ENCODE measurements at regions of chr11 and their contacts with region 1.

Region 1: DNA sequence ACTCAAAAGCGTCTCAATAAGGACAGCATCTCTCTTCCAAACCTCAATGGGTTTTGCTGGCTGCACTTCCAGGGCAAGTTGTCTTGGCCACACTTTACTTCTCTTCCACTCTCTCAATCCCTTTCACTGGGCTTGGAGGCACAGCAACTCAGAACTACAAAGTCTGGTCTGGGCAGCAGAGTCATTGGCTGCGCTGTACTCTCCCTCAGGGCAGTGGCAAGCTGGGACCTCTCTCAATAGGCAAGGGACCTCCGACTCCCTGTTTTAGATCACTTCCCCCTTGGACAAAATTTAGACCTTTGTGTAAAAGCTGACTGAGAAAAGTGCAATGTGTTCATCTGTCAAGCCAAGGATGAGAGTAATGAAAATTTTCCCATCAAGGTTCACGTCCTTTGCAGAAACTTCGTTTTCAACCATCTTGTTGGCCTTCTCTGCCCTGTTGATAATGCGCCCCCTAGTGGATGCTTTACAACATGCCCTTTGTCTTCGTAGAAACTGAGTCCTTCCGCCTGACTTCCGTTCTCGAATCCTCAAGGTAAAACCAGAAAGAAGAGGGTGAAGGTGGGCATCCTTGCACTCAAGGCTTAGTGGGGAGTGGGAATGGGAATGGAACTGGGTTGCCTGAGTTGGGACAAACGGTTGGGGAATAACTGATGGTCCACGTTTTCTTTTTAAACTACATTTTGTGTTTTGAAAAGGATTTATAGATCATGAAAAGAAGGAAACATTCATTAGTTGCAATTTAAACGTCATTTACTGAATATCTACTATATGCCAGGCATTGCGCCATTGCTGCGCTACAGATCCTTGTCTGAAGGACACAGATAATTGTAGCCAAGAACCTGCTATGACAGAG is 99.1 kb downstream of the CD44 start:
- DNase-seq: peak; percentile 68
- H3K4me3 Mint-ChIP-seq: no peak overlapping the region
- H3K27ac Mint-ChIP-seq: no peak overlapping the region
- H3K4me1 Mint-ChIP-seq: peaks cover 72% of the 10 kb centered on the region
- H3K27me3 Mint-ChIP-seq: no peaks in the 10 kb centered on the region

Region 2: GRCh38 chr11:34926101-34926830 is 311.8 kb before region 1 on chr11:
- CTCF ChIA-PET with region 1: interaction called, 8 read pairs
- POLR2A ChIA-PET with region 1: no interaction called
- intact Hi-C with region 1: loop called (anchors 1 kb)
- DNase-seq: no peak
- H3K4me3 Mint-ChIP-seq: no peak overlapping the region
- H3K27ac Mint-ChIP-seq: no peak overlapping the region
- H3K4me1 Mint-ChIP-seq: peaks cover 16% of the 10 kb centered on the region
- H3K27me3 Mint-ChIP-seq: no peaks in the 10 kb centered on the region

Region 3: DNA sequence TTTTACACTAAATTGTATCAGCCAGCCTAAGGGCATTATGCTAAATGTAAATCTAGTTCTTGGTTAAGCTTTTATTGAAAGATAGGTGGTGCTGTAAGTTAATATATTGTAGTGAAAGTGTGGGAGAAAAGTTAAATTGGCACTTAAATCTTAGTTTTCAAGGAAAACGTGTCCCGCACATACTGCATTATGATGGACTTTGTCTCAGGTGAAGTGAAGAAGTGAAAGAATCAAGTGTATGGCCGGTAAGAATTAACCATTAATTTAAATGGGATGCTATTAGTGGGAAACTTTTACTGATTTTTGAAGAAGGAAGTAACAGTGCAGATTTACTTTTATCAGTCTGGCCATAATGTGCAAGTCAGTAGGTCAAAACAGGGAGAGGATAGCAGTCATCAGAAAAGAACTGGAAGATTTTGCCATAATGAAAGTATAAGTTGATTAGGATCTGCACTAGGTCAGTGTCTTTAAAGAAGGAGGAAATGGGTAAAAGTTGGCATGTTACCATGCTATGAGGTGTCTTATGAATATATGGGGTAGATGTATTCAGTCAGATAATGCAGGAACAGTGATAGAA is 240.0 kb before region 1 on chr11:
- CTCF ChIA-PET with region 1: interaction called, 12 read pairs
- POLR2A ChIA-PET with region 1: no interaction called
- intact Hi-C with region 1: loop called (anchors 1 kb)
- DNase-seq: no peak
- H3K4me3 Mint-ChIP-seq: peak overlapping the region; percentile 7
- H3K27ac Mint-ChIP-seq: peak overlapping the region; percentile 25
- H3K4me1 Mint-ChIP-seq: peaks cover 19% of the 10 kb centered on the region
- H3K27me3 Mint-ChIP-seq: no peaks in the 10 kb centered on the region

Region 4: GRCh38 chr11:35006389-35007128 is 231.5 kb before region 1 on chr11:
- CTCF ChIA-PET with region 1: interaction called, 7 read pairs
- POLR2A ChIA-PET with region 1: no interaction called
- intact Hi-C with region 1: loop called (anchors 2 kb)
- DNase-seq: peak; percentile 73
- H3K4me3 Mint-ChIP-seq: no peak overlapping the region
- H3K27ac Mint-ChIP-seq: no peak overlapping the region
- H3K4me1 Mint-ChIP-seq: peaks cover 49% of the 10 kb centered on the region
- H3K27me3 Mint-ChIP-seq: peaks cover 4% of the 10 kb centered on the region

Region 5: DNA sequence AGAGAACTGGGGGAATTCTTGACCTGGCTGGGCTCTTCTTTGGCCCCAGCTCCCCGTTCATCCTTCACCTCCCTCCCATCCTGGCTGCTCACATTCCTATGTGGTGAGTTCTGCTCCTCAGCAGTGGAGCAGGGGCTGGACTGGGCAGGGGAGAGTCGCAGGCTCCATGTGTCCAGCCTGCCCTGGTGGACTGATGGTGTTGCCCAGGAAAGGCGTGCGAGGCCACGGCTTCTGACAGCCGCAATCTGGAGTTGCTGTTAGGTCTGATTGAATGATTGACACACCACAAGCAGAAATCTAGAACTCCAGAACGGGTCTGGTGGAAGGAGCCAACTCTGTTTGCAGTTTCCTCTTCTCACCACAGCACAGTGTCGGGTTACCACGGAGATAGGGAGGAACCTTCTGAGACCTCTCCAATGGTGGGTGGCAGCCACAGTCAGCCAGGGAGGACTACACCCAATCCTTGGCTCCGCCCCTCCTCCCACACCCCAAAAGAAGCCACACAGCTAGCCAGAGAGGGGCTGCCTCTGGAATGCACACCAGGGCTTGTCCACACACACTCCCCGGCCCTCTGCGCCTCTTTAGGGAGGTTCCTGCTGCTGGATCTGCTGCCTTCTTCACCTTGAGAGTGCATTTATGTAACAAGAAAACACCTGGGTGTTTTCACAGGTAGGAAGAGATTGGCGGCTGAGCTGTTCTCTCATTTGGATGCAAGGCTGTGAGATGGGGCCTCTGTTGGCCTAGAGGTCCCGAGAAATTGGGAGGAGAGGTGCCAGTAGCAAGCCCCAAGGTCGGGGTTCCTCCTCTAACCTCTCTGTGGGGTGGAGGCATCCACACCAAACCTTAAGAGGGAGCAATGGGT is 155.5 kb before region 1 on chr11:
- CTCF ChIA-PET with region 1: no interaction called
- POLR2A ChIA-PET with region 1: no interaction called
- intact Hi-C with region 1: loop called (anchors 5 kb)
- DNase-seq: peak; percentile 90
- H3K4me3 Mint-ChIP-seq: peak overlapping the region; percentile 62
- H3K27ac Mint-ChIP-seq: peak overlapping the region; percentile 81
- H3K4me1 Mint-ChIP-seq: peaks cover 93% of the 10 kb centered on the region
- H3K27me3 Mint-ChIP-seq: no peaks in the 10 kb centered on the region

Region 6: GRCh38 chr11:35214792-35215193 is 23.3 kb before region 1 on chr11:
- CTCF ChIA-PET with region 1: interaction called, 3 read pairs
- POLR2A ChIA-PET with region 1: no interaction called
- intact Hi-C with region 1: loop called (anchors 1 kb)
- DNase-seq: peak; percentile 78
- H3K4me3 Mint-ChIP-seq: no peak overlapping the region
- H3K27ac Mint-ChIP-seq: peak overlapping the region; percentile 81
- H3K4me1 Mint-ChIP-seq: peaks cover 74% of the 10 kb centered on the region
- H3K27me3 Mint-ChIP-seq: no peaks in the 10 kb centered on the region

Region 7: DNA sequence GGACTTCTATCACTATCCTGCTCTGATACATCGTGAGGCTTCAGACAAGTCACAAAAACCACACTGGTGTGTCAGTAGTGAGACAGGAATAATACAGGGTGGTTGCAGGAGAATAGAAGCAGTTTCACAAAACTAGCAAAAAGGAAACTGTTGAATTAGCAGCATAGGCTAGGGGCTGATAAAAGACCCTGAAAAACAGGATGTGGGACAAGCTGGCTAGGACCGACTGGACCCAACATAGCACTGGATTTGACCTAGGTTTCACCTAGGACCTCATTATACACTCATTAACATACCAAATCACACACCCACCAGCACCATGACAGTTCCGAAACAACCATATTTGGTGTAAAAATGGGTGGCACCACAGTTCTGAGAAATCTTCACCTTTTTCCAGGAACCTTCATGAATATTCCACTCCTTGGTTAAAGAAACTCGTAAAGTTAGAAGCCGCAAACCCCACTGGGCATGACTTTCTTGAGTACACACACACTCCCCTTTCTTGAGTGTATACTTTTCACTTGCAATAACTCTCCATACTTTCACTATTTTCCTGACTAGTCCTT is 105.0 kb after region 1 on chr11:
- CTCF ChIA-PET with region 1: interaction called, 5 read pairs
- POLR2A ChIA-PET with region 1: no interaction called
- intact Hi-C with region 1: loop called (anchors 5 kb)
- DNase-seq: peak; percentile 58
- H3K4me3 Mint-ChIP-seq: peak overlapping the region; percentile 42
- H3K27ac Mint-ChIP-seq: peak overlapping the region; percentile 66
- H3K4me1 Mint-ChIP-seq: peaks cover 42% of the 10 kb centered on the region
- H3K27me3 Mint-ChIP-seq: peaks cover 2% of the 10 kb centered on the region

Region 8: DNA sequence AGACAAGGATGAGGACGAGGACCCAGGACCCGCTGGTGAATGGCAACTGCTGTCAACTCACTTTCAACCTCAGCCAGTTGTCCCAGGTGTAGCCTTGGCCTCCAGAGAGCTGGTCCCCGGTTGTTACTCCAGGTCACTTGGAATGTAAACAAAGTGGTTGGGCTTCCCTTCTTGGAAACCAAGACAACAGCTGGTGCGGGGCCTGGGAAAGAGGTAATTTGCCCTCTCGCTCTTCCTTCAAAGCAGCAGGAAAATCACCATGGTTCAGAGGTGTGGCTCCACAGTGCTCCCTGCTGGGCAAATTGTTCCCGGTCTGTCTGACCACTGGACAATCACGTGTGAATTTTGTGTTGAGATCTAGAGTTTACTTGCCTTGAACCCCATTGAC is 166.3 kb after region 1 on chr11:
- CTCF ChIA-PET with region 1: no interaction called
- POLR2A ChIA-PET with region 1: no interaction called
- intact Hi-C with region 1: no loop called
- DNase-seq: peak; percentile 37
- H3K4me3 Mint-ChIP-seq: no peak overlapping the region
- H3K27ac Mint-ChIP-seq: no peak overlapping the region
- H3K4me1 Mint-ChIP-seq: no peaks in the 10 kb centered on the region
- H3K27me3 Mint-ChIP-seq: no peaks in the 10 kb centered on the region

Measured in activated CD4-positive, alpha-beta memory T cell treated with anti-CD3 and anti-CD28 coated beads for 36 hours (primary cell).